ENCODE measurements at regions of chr16 and their contacts with region 1.

Region 1: DNA sequence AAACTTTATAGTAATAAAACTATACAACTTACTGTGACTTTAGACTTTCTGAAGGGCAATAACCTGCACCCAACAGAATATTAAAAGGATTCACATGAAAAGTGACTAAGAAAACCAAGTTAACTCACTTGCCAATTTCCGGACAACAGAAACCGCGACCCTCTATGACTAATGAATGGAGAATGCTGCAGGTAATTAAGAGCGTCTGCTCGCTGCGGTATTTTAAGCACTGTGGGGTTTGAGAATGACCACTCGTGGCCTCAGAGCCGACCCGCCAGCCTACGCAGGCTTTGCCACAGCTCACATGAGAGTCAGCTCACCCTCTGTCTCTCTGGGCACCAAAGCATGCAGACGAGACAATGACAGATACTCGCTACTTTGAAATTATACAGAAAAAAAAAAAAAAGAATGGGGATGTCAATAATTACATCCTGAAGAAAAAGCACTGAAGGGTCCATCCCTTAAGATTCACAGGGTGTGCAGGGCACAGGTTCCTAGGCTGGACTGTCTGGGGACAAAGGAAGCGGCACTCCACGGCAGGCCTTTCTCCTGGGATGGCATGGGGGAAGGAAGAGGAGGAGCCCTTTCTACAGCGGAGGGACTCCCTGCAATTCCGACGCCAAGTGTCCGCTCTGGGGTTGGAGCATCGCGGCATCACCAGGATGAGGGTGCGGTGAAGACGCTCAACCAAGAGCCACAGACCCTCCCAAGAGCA is 35.0 kb downstream of the ZCCHC14 start:
- DNase-seq: no peak
- ATAC-seq: peak in 3 of 8 donors; percentile 31 to 41 (median 39)
- H3K4me3 ChIP-seq: no peak overlapping the region
- H3K27ac ChIP-seq: peak overlapping the region in 4 of 10 donors; percentile 1 to 52 (median 26)
- H3K4me1 ChIP-seq: peaks cover 12 to 48% (median 32%) of the 10 kb centered on the region in 9 donors
- H3K27me3 ChIP-seq: no peaks in the 10 kb centered on the region
- CTCF ChIP-seq: no peak

Region 2: DNA sequence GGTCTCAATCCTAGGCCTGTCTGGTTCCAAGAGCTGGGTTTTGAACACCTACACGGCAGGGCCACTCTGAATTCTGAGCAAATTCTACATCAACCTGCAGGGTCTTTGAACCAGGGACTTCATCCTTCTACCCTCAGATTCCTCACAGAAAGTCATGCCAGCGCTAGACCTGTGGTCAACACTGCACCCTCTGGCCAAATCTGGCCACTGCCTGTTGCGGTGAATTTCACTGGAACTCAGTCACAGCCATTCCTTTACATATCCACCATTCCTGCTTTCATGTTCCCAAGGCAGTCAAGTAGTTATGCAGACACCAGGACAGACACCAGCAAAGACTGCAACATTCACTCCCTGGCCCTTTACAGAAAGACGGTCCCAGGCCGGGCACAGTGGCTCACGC is 285.2 kb before region 1 on chr16:
- intact Hi-C with region 1: no loop called
- DNase-seq: no peak
- ATAC-seq: no peak
- H3K4me3 ChIP-seq: no peak overlapping the region
- H3K27ac ChIP-seq: no peak overlapping the region
- H3K4me1 ChIP-seq: no peaks in the 10 kb centered on the region
- H3K27me3 ChIP-seq: peaks cover 0 to 13% (median 0%) of the 10 kb centered on the region in 7 donors
- CTCF ChIP-seq: no peak

Region 3: DNA sequence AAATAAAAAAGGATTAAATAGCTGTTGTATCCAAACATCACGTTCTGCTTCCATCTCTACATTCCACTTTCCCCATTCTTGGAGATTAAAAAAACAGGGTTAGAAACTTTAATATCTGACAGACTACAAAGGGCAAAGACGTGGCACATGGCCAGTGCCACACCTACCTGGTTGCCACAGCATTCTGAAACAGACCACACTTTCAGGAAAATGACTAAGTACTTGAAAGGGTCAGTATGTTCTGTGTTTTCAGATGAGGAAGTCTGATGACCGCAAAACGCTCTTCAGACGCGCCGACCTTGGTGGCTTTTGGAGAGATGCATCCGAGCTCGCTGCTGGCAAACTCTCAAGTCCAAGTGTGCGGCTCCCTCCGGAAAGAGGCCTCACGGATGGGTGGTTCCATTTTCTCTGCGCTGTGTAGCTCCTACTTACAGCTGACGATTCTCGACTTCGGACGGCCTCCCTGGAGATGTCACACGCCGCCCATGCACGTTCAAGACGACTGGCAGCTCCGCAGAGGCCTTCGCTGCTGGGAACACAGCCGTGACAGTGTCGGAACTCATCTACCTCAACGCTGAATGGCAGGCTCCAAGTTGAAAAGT is 50.3 kb before region 1 on chr16:
- intact Hi-C with region 1: loop called in 1 of 10 experiments (anchors 10 kb)
- DNase-seq: peak in 1 of 2 donors; percentile 51
- ATAC-seq: peak; percentile 10 to 82 (median 52)
- H3K4me3 ChIP-seq: no peak overlapping the region
- H3K27ac ChIP-seq: peak overlapping the region in 3 of 10 donors; percentile 8 to 10 (median 9)
- H3K4me1 ChIP-seq: peaks cover 0 to 20% (median 0%) of the 10 kb centered on the region in 9 donors
- H3K27me3 ChIP-seq: no peaks in the 10 kb centered on the region
- CTCF ChIP-seq: no peak

Region 4: GRCh38 chr16:87492721-87493607 is 35.1 kb after region 1 on chr16 and contains the start of gene ZCCHC14:
- intact Hi-C with region 1: loop called in 1 of 10 experiments (anchors 5 kb)
- DNase-seq: peak; percentile 100
- ATAC-seq: peak; percentile 98 to 100 (median 99)
- H3K4me3 ChIP-seq: peak within 1 kb of the TSS; percentile 47 to 65 (median 58)
- H3K27ac ChIP-seq: peak within 1 kb of the TSS in 9 of 10 donors; percentile 6 to 87 (median 68)
- H3K4me1 ChIP-seq: peaks cover 11 to 54% (median 45%) of the 10 kb centered on the region in 9 donors
- H3K27me3 ChIP-seq: no peaks in the 10 kb centered on the region
- CTCF ChIP-seq: no peak
- total RNA-seq, gene ZCCHC14: 10.6 to 19.3 (median 16.1) TPM

Region 5: GRCh38 chr16:87580855-87581261 is 123.0 kb after region 1 on chr16:
- intact Hi-C with region 1: no loop called
- DNase-seq: no peak
- ATAC-seq: no peak
- H3K4me3 ChIP-seq: no peak overlapping the region
- H3K27ac ChIP-seq: no peak overlapping the region
- H3K4me1 ChIP-seq: peaks cover 4 to 25% (median 18%) of the 10 kb centered on the region in 9 donors
- H3K27me3 ChIP-seq: peaks cover 0 to 53% (median 23%) of the 10 kb centered on the region in 7 donors
- CTCF ChIP-seq: no peak